Activated CD4-positive, alpha-beta memory T cell treated with anti-CD3 and anti-CD28 coated beads, Interleukin-2, amount 10 ng/mL, durations not matched to agents 7 days and 5 days (primary cell): ENCODE measurements at regions of chr2 and their contacts with region 1.

Region 1: DNA sequence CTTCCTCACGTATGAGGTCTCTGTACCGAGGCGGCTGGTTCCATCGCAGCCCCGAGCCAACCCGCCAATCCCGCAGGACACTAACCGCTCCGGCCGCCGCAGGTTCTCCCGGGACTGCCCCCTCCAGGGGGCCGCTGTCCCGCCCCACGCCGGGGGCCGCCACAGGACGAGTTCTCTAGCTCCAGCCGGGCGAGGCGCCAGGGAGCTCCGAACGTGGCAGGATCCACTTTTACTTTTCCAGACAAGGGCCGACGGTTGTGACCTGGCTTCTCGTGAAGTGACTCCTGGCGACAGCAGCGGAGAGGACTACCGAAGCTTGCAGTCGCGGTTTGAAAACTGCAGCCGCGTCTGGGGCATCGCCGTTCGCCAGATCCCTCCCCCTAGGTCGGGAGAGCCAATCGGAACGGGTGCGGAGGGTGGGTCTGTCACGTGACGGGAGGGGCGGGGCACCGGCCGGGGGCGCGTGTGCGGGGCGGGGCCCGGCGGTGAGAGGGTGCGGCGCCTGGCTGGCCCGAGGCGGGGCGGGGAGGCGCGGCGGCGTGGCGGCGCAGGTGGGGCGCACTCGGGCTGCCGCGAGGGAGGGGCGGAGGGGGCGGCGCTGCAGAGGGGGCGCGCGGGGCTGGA is at the start of gene STK17B:
- DNase-seq: peak; percentile 98
- H3K4me3 Mint-ChIP-seq: peak within 1 kb of the TSS; percentile 94
- H3K27ac Mint-ChIP-seq: peak within 1 kb of the TSS; percentile 97
- H3K4me1 Mint-ChIP-seq: peaks cover 39% of the 10 kb centered on the region
- H3K27me3 Mint-ChIP-seq: no peaks in the 10 kb centered on the region
- total RNA-seq, gene STK17B: 365 to 367 TPM

Region 2: GRCh38 chr2:196160101-196160500 is 11.3 kb before region 1 on chr2:
- CTCF ChIA-PET with region 1: interaction called, 24 read pairs
- POLR2A ChIA-PET with region 1: interaction called, 383 read pairs
- DNase-seq: peak; percentile 74
- H3K4me3 Mint-ChIP-seq: peak overlapping the region; percentile 74
- H3K27ac Mint-ChIP-seq: peak overlapping the region; percentile 80
- H3K4me1 Mint-ChIP-seq: peaks cover 71% of the 10 kb centered on the region
- H3K27me3 Mint-ChIP-seq: no peaks in the 10 kb centered on the region

Region 3: DNA sequence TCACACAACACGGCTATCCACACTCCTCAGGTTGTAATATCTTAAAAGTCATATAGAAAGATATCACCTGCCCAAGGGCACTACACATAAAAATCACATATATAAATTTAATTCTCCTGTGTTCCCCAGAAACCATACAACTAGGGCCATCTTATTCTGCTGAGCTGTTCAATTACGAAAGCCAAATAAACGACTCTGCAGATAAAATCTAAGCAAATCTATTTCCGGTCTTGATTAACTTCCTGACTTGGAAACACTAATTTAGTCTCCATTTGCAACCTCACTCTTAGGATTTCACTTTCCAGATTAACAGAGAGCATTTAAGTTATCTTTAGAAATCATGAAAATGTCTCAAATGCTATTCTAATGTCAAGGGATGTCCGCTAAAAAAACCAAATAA is 23.9 kb after region 1 on chr2:
- CTCF ChIA-PET with region 1: no interaction called
- POLR2A ChIA-PET with region 1: interaction called, 88 read pairs
- DNase-seq: no peak
- H3K4me3 Mint-ChIP-seq: peak overlapping the region; percentile 43
- H3K27ac Mint-ChIP-seq: peak overlapping the region; percentile 48
- H3K4me1 Mint-ChIP-seq: peaks cover 54% of the 10 kb centered on the region
- H3K27me3 Mint-ChIP-seq: no peaks in the 10 kb centered on the region

Region 4: DNA sequence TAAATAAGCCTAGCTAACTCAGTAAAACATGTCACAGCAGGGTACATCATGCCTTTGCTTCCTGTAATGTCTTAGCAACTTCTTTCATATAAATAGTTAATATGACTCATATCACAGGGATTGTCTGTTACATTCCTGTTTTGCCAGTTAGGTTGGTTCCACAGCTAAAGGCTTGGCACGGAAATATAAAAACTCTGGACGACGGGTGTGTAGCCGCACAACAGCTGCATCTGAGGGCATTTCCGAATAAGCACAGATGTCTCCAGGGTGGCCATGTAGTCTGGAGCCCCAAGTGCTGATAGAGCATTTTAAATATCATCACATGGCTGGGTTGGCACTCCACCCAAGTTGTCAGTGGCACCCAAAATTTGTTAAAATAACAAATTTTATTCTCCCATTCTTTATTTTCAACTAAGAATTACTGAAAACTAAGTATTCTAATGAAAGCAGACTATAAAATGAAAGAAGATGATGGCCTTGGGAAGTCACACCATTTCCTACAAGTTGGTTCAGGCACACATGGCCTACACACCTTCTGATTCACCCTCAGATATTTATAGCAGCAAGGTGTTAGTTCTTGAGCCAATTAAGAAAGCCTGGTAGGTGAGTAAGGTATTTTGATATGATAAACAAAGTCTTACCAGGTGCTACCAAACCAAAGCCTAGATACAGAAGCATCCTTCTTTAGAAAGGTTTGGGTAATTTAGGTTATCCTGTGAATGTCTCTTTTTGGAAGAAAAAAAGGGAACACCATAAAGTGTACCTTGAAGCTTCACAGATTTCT is 61.9 kb after region 1 on chr2:
- CTCF ChIA-PET with region 1: interaction called, 5 read pairs
- POLR2A ChIA-PET with region 1: interaction called, 188 read pairs
- DNase-seq: no peak
- H3K4me3 Mint-ChIP-seq: no peak overlapping the region
- H3K27ac Mint-ChIP-seq: peak overlapping the region; percentile 85
- H3K4me1 Mint-ChIP-seq: peaks cover 91% of the 10 kb centered on the region
- H3K27me3 Mint-ChIP-seq: no peaks in the 10 kb centered on the region

Region 5: GRCh38 chr2:196263181-196263747 is 91.9 kb after region 1 on chr2:
- CTCF ChIA-PET with region 1: interaction called, 21 read pairs
- POLR2A ChIA-PET with region 1: interaction called, 151 read pairs
- DNase-seq: peak; percentile 56
- H3K4me3 Mint-ChIP-seq: peak overlapping the region; percentile 76
- H3K27ac Mint-ChIP-seq: peak overlapping the region; percentile 88
- H3K4me1 Mint-ChIP-seq: peaks cover 76% of the 10 kb centered on the region
- H3K27me3 Mint-ChIP-seq: no peaks in the 10 kb centered on the region

Region 6: DNA sequence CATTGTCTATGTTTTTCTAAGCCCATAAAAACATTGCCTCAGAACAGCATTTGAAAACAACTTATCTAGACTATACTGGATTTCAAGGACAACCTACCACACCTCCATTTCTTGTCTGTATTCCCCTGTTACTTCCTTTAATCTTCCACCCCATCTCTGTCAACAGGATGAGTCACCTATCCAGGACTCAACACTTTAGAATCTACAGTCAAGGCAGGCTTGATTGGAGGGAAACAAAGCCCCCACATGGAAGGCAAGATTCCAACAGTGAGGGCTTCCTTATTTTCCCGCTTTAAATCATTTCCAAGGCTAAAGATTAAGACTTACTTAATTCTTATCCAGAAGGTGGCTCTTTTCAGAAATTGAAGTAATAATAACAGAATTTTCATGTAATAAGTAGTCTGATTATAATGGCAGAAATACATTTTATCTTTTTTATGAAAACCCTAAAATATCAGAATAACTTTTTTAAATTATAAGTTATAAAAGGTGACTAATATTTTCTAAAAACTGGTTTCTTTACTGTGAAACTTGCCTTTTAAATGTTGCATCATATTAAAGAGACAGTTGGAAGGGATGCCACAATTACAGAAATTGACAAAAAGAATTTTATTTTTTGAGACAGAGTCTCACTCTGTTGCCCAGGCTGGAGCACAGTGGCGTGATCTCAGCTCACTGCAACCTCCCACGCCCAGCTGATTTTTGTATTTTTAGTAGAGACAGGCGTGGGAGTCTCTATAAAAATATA is 329.5 kb after region 1 on chr2:
- CTCF ChIA-PET with region 1: no interaction called
- POLR2A ChIA-PET with region 1: no interaction called
- DNase-seq: no peak
- H3K4me3 Mint-ChIP-seq: no peak overlapping the region
- H3K27ac Mint-ChIP-seq: no peak overlapping the region
- H3K4me1 Mint-ChIP-seq: peaks cover 2% of the 10 kb centered on the region
- H3K27me3 Mint-ChIP-seq: peaks cover 17% of the 10 kb centered on the region